ENCODE measurements at regions of chrX and their contacts with region 1.

Region 1: GRCh38 chrX:119682019-119682989 is 10.7 kb downstream of the SEPTIN6 start:
- DNase-seq: peak; percentile 37
- CTCF ChIP-seq: no peak

Region 2: GRCh38 chrX:119693040-119693995 is 11.0 kb after region 1 on chrX and contains the start of gene SEPTIN6:
- CTCF ChIA-PET with region 1: interaction called, 11 read pairs
- POLR2A ChIA-PET with region 1: interaction called, 6 read pairs
- DNase-seq: peak; percentile 87
- CTCF ChIP-seq: no peak

Region 3: GRCh38 chrX:119801253-119802221 is 119.2 kb after region 1 on chrX:
- CTCF ChIA-PET with region 1: no interaction called
- POLR2A ChIA-PET with region 1: no interaction called
- DNase-seq: no peak
- CTCF ChIP-seq: no peak

Measured in GM10248 (cell line).